Heart right ventricle (tissue), 16 donors: ENCODE measurements at regions of chr2 and their contacts with region 1.

Region 1: GRCh38 chr2:148634749-148635148 is 9.8 kb upstream of the EPC2 start:
- DNase-seq: no peak
- ATAC-seq: no peak
- H3K4me3 ChIP-seq: no peak overlapping the region
- H3K27ac ChIP-seq: no peak overlapping the region
- H3K4me1 ChIP-seq: no peaks in the 10 kb centered on the region
- H3K27me3 ChIP-seq: no peaks in the 10 kb centered on the region
- CTCF ChIP-seq: no peak

Region 2: DNA sequence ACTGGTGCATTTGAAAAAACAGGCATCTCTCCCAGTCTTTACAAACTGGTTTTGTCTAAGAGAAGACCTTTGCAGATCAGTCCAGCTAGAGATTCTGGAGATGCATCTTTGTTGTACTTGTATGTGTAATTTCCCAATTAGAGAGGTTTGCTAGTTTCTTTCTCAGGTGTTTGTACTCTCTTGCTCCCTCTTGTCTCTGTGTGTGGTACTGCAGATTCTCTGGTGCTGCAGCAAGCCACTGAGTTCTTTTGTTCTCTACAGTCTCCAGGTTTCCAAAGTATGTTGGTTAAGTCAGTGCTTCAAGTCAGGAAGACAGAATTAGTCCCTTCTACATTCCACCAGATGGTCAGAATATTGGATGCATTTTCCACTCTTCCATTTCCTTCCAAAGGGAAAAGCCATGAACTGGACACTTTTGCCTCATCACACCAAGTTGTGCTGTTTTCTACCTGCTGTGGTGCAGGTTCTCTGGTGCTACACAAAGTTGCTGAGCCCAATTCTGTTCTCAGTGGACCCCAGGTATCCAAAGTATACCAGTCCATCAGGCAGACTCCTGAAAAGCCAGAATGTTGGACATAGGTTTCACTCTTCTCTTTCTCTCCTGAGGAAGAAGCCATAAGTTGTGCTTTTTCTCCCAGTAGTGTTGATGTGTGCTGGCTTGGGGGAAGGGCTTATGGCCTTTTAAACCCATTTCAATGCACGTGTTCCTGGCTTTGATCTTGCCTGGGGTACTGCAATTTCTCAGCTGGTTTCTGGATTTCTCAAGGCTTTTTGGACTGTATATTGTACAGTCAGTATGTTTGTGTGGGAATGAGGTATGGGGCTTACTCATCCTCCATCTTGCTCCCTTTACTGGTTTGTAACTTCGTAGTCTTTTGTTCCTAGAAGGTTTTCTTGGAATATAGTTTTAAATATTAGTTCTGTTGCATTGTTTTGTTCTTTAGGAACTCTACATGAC is 39.6 kb after region 1 on chr2:
- intact Hi-C with region 1: no loop called
- DNase-seq: no peak
- ATAC-seq: no peak
- H3K4me3 ChIP-seq: no peak overlapping the region
- H3K27ac ChIP-seq: no peak overlapping the region
- H3K4me1 ChIP-seq: peaks cover 9 to 54% (median 30%) of the 10 kb centered on the region in 9 donors
- H3K27me3 ChIP-seq: no peaks in the 10 kb centered on the region
- CTCF ChIP-seq: peak in 7 of 9 donors; percentile 16 to 63 (median 37)

Region 3: DNA sequence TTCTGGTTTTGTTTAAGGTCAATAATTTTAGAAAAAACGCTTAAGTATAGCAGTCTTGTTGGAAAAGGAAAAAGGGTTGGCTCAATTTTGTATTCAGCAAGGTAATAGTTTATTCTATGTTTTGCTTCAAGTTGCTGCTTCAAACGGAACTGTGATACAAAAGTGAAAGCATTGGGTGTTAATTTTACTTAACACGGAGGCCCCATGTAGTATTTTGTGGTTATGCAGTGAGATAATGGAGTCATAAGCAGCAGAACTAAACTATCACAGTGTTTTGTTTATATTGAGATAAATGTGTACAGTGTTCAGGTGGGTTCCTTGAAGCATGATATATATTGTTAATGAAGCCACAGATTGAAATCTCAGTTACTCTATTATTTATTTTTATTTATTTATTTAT is 336.8 kb after region 1 on chr2:
- intact Hi-C with region 1: loop called in 1 of 10 experiments (anchors 10 kb)
- DNase-seq: no peak
- ATAC-seq: no peak
- H3K4me3 ChIP-seq: no peak overlapping the region
- H3K27ac ChIP-seq: no peak overlapping the region
- H3K4me1 ChIP-seq: no peaks in the 10 kb centered on the region
- H3K27me3 ChIP-seq: no peaks in the 10 kb centered on the region
- CTCF ChIP-seq: no peak